B cell (primary cell): ENCODE measurements at regions of chr2 and their contacts with region 1.

Region 1: GRCh38 chr2:19347619-19348562 is 10.5 kb downstream of the OSR1 start:
- DNase-seq: peak; percentile 99
- ATAC-seq: peak; percentile 89
- H3K4me3 ChIP-seq: peak overlapping the region; percentile 69 to 99 (median 85)
- H3K4me3 Mint-ChIP-seq: peak overlapping the region; percentile 94
- H3K27ac ChIP-seq: peak overlapping the region; percentile 86 to 92
- H3K27ac Mint-ChIP-seq: peak overlapping the region; percentile 99
- H3K4me1 ChIP-seq: peaks cover 43 to 46% of the 10 kb centered on the region in 2 donors
- H3K4me1 Mint-ChIP-seq: peaks cover 30% of the 10 kb centered on the region
- H3K27me3 ChIP-seq: peaks cover 0 to 47% (median 36%) of the 10 kb centered on the region in 4 experiments
- H3K27me3 Mint-ChIP-seq: peaks cover 30% of the 10 kb centered on the region
- CTCF ChIP-seq: no peak

Region 2: DNA sequence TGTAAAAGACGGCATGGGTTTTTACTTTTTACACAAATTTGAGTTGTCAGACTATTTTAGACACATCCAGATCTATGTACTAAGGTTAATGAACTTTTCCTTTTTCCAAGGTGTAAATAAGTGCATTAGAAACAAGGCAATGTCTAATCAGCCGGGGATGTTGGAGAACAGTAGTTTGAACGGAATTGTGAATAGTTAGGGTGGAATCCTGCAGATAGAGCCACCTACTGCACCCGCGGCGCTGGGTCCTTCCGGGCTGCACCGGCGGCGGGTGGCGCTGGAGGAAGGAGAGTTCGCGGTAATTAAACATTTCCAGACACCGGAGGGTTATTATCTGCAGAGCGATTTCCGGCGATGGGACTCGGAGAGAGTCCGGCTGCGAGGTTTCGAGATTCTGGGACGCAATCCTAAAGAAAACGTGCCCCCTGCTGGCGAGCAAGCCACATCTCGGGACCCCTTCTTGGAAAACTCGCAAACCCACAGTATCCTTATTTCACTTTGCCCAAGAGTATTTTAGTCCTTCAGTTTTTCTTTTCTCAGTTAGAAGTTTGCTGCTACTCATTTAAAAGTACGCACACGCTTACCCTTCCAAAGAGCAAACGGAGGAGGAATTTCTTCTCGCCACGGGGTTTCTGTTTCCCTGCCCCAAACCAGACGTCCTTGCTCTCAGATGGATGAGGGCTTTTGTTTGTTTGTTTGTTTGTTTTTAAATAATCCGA is 15.0 kb after region 1 on chr2:
- CTCF ChIA-PET with region 1: interaction called, 17 read pairs
- POLR2A ChIA-PET with region 1: interaction called, 13 read pairs
- intact Hi-C with region 1: loop called (anchors 1 kb)
- DNase-seq: peak; percentile 62
- ATAC-seq: peak; percentile 31
- H3K4me3 ChIP-seq: peak overlapping the region; percentile 56 to 99 (median 71)
- H3K4me3 Mint-ChIP-seq: peak overlapping the region; percentile 99
- H3K27ac ChIP-seq: no peak overlapping the region
- H3K27ac Mint-ChIP-seq: peak overlapping the region; percentile 67
- H3K4me1 ChIP-seq: peaks cover 42 to 45% of the 10 kb centered on the region in 2 donors
- H3K4me1 Mint-ChIP-seq: peaks cover 38% of the 10 kb centered on the region
- H3K27me3 ChIP-seq: peaks cover 0 to 46% (median 32%) of the 10 kb centered on the region in 4 experiments
- H3K27me3 Mint-ChIP-seq: peaks cover 32% of the 10 kb centered on the region
- CTCF ChIP-seq: peak; percentile 63

Region 3: DNA sequence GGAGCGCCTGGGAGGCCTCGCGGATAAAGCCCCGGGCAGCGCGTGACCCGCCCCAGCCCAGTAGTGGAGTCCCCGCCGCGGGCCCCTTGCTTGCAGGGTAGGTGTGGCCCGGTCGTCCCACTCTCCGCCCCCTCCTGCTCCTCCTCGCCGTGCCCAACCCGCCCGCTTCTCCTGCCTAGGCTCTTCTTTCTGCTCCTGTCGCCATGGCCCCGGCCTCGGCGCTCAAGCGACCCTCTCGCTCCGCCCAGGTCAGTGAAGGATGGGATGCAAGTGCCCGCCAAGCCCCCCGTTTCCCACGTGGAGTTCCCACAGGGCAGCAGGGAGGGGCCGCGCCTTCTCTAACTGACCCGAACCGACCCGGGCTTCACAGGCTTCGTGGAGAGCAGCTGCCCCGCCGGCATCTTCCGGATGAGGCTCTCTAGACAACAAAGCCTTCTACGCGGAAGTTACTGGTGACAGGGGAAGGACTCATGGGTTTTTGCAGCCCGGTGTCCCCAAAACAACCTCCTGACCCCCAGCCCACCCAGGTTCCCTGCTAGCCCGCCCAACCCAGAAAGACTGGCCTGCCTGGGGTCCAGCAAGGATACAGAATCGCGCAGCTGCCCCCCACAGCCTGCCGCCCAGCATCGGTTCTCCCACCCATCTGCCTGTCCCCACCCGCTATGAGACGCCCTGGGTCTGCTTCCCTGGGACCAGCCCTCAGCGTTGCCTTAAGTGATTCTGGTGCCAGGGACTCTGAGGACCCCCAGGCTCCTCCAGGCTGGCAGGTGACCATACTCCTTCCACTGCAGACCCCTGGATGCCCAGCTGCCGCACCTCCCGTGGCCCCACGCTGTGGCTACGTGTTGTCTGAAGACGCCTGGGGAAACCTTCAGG is 521.1 kb after region 1 on chr2:
- CTCF ChIA-PET with region 1: no interaction called
- POLR2A ChIA-PET with region 1: no interaction called
- intact Hi-C with region 1: loop called (anchors 2 kb)
- DNase-seq: peak; percentile 74
- ATAC-seq: peak; percentile 96
- H3K4me3 ChIP-seq: peak overlapping the region; percentile 42 to 77 (median 62)
- H3K4me3 Mint-ChIP-seq: peak overlapping the region; percentile 98
- H3K27ac ChIP-seq: peak overlapping the region; percentile 62 to 84
- H3K27ac Mint-ChIP-seq: peak overlapping the region; percentile 95
- H3K4me1 ChIP-seq: peaks cover 8 to 19% of the 10 kb centered on the region in 2 donors
- H3K4me1 Mint-ChIP-seq: peaks cover 27% of the 10 kb centered on the region
- H3K27me3 ChIP-seq: peaks cover 0 to 3% (median 0%) of the 10 kb centered on the region in 4 experiments
- H3K27me3 Mint-ChIP-seq: no peaks in the 10 kb centered on the region
- CTCF ChIP-seq: no peak

Region 4: GRCh38 chr2:19989681-19990415 is 642.0 kb after region 1 on chr2 and contains the start of gene WDR35:
- CTCF ChIA-PET with region 1: no interaction called
- POLR2A ChIA-PET with region 1: interaction called, 3 read pairs
- intact Hi-C with region 1: loop called (anchors 2 kb)
- DNase-seq: peak; percentile 92
- ATAC-seq: peak; percentile 88
- H3K4me3 ChIP-seq: peak within 1 kb of the TSS; percentile 68 to 93 (median 88)
- H3K4me3 Mint-ChIP-seq: peak within 1 kb of the TSS; percentile 91
- H3K27ac ChIP-seq: peak within 1 kb of the TSS; percentile 69 to 77
- H3K27ac Mint-ChIP-seq: peak within 1 kb of the TSS; percentile 89
- H3K4me1 ChIP-seq: peaks cover 16 to 22% of the 10 kb centered on the region in 2 donors
- H3K4me1 Mint-ChIP-seq: peaks cover 28% of the 10 kb centered on the region
- H3K27me3 ChIP-seq: peaks cover 0 to 7% (median 2%) of the 10 kb centered on the region in 4 experiments
- H3K27me3 Mint-ChIP-seq: peaks cover 21% of the 10 kb centered on the region
- CTCF ChIP-seq: no peak
- total RNA-seq, gene WDR35: 9.4 and 11.8 TPM in 2 replicates

Region 5: GRCh38 chr2:20051532-20052228 is 703.8 kb after region 1 on chr2 and contains the start of gene LAPTM4A:
- CTCF ChIA-PET with region 1: interaction called, 3 read pairs
- POLR2A ChIA-PET with region 1: no interaction called
- intact Hi-C with region 1: loop called (anchors 1 kb)
- DNase-seq: peak; percentile 99
- ATAC-seq: peak; percentile 89
- H3K4me3 ChIP-seq: peak within 1 kb of the TSS; percentile 49 to 99 (median 85)
- H3K4me3 Mint-ChIP-seq: no peak within 1 kb of the TSS
- H3K27ac ChIP-seq: peak within 1 kb of the TSS; percentile 88 to 98
- H3K27ac Mint-ChIP-seq: no peak within 1 kb of the TSS
- H3K4me1 ChIP-seq: peaks cover 25 to 28% of the 10 kb centered on the region in 2 donors
- H3K4me1 Mint-ChIP-seq: peaks cover 30% of the 10 kb centered on the region
- H3K27me3 ChIP-seq: peaks cover 0 to 15% (median 7%) of the 10 kb centered on the region in 4 experiments
- H3K27me3 Mint-ChIP-seq: peaks cover 14% of the 10 kb centered on the region
- CTCF ChIP-seq: no peak
- total RNA-seq, gene LAPTM4A: 70.1 and 74.4 TPM in 2 replicates